Left colon (tissue), 2 donors: ENCODE measurements at regions of chr1 and their contacts with region 1.

Region 1: DNA sequence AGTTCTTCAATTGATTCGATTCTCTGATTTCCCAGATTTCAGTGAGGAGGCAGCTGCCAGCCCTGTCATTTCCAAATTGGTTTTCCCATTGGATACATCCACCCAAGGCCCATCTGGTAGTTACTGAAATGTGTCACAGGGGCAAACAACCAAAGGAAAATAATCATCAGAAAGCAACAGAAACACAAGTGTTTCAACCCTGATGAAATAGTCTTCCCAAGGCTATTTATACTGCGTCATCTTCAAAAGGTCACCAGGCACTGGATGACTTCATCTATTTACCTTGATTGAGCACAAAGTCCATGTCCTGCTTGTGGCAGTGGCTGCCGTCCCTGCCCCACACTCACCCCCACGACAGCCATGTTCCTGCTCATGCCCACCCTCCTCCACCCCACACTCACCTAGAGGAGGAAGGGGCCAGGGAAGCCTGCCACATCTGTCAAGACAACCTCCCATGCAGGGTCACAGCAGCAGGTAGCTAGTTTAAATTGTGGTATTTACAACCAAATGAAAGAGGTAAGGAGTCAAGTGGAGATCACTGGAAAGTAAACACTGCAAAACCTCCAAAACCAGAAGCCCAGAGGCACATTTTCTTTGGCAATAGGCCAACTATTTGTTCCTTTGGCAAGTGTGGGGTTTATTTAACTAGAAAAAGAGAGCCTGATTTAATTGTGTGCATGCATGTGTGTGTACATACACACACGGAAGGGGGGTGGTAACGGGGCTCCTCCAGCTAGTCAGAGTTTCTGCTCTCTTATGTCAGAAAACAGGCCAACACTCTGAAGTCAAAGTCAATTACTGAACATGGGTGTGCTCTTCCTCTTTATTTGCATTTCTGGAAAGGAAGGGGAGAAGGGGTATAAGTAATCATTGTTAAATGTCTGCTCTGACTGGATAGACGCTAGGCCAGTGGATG is 49.5 kb upstream of the RAB4A start:
- DNase-seq: peak; percentile 46 to 71
- ATAC-seq: peak; percentile 84

Region 2: GRCh38 chr1:228734881-228735801 is 486.2 kb before region 1 on chr1 and contains the start of gene RHOU:
- intact Hi-C with region 1: loop called in 1 of 2 experiments (anchors 5 kb)
- DNase-seq: peak; percentile 60 to 80
- ATAC-seq: peak; percentile 85
- total RNA-seq, gene RHOU: 43.6 to 52.0 TPM

Region 3: DNA sequence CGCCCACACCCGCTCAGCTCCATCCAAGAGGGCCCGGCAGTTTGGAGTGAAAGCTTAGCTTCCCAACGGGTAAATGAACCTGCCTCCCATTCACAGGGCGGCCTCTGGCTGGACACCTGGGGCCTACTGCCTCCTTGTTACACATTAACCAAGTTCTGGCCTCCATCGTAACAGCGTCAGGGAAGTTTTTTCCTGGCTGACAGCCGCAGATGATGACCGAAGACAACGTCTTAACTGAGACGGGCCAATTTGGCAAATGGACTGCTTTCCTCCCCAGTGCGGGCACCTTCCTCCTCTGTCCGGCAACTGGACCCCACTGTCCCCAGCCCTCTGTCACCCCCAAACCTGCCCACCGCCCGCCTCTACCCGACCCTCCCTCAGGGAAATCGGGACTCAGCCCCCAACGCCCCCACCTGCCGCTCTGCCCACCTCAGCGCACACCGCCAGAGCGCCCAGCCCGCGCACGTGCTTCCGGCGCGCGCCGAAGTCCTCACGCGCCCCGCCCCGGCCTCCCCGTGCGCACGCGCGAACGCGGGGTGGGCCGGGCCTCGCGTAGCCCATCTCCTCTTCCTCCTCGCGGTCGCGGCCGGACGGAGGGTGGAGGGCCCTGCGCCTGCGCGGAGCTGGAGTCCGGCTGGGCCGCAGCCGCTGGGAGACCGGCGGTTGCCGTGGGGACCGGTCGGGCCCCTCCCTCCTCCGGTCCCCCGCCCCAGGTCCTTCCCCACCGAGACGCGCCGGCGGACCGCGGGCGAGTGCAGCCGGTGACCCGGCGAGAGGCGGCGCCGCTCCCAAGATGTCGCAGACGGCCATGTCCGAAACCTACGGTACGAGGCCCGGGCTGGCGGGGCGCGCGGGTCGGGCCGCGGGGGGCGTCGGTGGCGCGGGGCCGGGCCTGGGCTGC is 49.4 kb after region 1 on chr1 and contains the start of gene RAB4A:
- intact Hi-C with region 1: no loop called
- DNase-seq: peak; percentile 87 to 89
- ATAC-seq: peak; percentile 89
- total RNA-seq, gene RAB4A: 91.1 to 95.7 TPM